Astrocyte of the cerebellum (primary cell): ENCODE measurements at regions of chr19 and their contacts with region 1.

Region 1: GRCh38 chr19:54029930-54030490 is 33.7 kb downstream of the VSTM1 start:
- DNase-seq: peak; percentile 34
- H3K4me3 ChIP-seq: no peak overlapping the region
- CTCF ChIP-seq: peak; percentile 70

Region 2: DNA sequence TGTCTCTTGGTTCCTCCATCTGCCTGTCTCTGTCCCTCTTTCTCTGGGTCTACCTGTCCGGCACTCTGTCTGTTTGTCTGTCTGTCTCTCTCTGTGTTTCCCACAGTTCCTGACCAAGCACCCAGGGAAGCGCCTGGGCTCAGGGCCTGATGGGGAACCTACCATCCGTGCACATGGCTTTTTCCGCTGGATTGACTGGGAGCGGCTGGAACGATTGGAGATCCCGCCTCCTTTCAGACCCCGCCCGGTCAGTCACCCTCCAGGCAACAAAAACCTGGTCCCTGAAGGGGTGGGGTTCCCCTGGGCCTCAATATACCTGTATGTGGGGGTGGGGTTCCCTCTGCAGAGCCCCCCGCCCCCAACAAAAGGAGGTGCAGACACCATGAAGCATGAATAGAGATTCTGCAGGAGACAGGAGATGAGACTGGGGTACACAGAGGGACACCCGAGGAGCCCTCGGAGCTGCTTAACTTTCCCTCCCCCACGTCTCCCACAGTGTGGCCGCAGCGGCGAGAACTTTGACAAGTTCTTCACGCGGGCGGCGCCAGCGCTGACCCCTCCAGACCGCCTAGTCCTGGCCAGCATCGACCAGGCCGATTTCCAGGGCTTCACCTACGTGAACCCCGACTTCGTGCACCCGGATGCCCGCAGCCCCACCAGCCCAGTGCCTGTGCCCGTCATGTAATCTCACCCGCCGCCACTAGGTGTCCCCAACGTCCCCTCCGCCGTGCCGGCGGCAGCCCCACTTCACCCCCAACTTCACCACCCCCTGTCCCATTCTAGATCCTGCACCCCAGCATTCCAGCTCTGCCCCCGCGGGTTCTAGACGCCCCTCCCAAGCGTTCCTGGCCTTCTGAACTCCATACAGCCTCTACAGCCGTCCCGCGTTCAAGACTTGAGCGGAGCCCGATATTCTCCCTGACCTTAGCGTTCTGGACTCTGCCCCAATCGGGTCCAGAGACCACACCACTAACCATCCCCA is 123.5 kb before region 1 on chr19:
- in situ Hi-C with region 1: loop called (anchors 25 kb)
- DNase-seq: no peak
- H3K4me3 ChIP-seq: no peak overlapping the region
- CTCF ChIP-seq: peak; percentile 82

Region 3: DNA sequence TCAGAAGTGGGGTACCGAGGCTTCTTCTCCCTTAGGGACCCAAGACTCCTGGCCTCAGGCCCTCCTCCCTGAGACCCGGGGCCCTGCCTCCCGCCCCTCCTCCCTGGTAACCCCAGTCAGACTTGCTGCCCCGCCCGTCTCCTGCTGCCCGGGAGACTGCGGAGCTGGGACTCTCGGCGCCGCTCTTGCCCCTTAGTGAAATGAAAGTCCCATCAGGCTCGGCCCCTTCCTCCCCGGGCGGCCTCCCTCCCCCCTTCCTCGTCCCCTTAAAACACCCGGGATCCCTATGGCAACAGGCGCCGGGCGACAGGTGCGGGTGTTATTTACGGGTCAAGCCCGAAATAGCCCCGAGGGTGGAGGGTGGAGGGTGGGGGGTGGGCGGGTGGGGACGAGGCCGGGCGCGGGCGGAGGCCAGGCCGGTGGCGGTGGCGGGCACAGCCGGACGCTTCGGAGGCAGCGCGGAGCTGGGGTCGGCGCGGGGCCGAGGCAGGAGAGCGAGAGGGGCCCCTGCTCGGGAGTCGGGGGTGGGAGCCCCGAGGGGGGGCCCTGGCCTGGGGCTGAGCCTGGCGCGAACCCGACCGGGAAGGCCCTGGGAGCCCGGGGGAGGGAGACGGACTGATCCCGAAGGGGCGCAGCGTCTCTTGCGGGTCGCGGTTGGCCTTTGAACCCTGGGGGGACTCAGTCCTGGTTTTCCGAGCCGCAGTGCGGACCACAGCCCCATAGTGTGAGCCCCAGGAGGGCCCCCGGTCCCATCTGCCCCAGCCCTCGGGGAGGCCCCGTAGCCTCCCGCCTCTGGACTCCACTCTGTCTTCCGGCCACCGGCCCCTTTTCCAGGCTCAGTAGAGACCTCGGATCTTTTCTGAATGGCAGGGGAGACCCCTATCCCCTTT is 38.5 kb before region 1 on chr19 and contains the start of gene CACNG6:
- in situ Hi-C with region 1: no loop called
- DNase-seq: no peak
- H3K4me3 ChIP-seq: peak within 1 kb of the TSS; percentile 19
- CTCF ChIP-seq: no peak

Region 4: DNA sequence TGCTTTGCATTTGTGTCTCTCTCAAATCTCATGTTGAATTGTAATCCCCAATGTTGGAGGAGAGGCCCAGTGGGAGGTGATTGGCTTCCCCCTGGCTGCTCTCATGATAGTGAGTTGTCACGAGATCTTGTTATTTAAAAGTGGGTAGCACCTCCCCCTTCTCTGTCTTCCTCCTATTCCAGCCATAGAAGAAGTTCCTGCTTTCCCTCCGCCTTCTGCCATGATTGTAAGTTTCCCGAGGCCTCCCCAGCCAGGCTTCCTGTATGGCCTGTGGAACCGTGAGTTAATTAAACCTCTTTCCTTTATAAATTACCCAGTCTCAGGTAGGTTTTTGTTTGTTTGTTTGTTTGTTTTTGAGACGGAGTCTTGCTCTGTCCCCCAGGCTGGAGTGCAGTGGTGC is 305.2 kb after region 1 on chr19:
- in situ Hi-C with region 1: no loop called
- DNase-seq: no peak
- H3K4me3 ChIP-seq: no peak overlapping the region
- CTCF ChIP-seq: no peak